Panc1 (cell line): ENCODE measurements at regions of chr6 and their contacts with region 1.

Region 1: GRCh38 chr6:17987576-17988421 is at the start of gene KIF13A:
- DNase-seq: no peak
- ATAC-seq: peak; percentile 91
- H3K4me3 ChIP-seq: peak within 1 kb of the TSS; percentile 72 to 91
- H3K27ac ChIP-seq: peak within 1 kb of the TSS; percentile 85
- H3K4me1 ChIP-seq: peaks cover 30% of the 10 kb centered on the region
- H3K27me3 ChIP-seq: no peaks in the 10 kb centered on the region
- CTCF ChIP-seq: no peak; the same call in 1 of the 2 replicates
- total RNA-seq, gene KIF13A: 49.3 TPM

Region 2: GRCh38 chr6:17865798-17866725 is 121.7 kb before region 1 on chr6:
- CTCF ChIA-PET with region 1: no interaction called
- POLR2A ChIA-PET with region 1: no interaction called
- in situ Hi-C with region 1: no loop called
- intact Hi-C with region 1: loop called (anchors 10 kb)
- DNase-seq: peak; percentile 92
- ATAC-seq: peak; percentile 91
- H3K4me3 ChIP-seq: no peak overlapping the region
- H3K27ac ChIP-seq: peak overlapping the region; percentile 81
- H3K4me1 ChIP-seq: peaks cover 50% of the 10 kb centered on the region
- H3K27me3 ChIP-seq: no peaks in the 10 kb centered on the region
- CTCF ChIP-seq: no peak

Region 3: DNA sequence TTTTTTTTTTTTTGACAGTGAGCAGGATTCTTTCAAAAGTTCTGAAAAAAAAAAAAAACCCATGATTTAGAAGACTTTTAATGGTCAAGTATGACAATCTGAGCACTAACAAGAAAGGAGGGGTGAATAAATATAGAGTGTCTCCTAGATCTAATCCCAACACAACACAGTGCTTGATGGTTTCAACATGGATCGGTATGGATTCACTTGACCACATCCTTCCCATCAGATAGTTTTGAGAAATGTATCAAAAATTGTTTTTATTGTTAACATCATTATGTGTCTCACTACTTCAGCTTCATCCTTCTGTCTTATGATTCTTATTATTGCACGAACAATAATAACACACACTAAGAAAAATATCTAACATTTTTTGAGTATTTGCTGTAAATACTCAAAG is 21.3 kb before region 1 on chr6:
- CTCF ChIA-PET with region 1: interaction called, 3 read pairs
- POLR2A ChIA-PET with region 1: interaction called, 10 read pairs
- in situ Hi-C with region 1: no loop called
- intact Hi-C with region 1: no loop called
- DNase-seq: no peak
- ATAC-seq: no peak
- H3K4me3 ChIP-seq: no peak overlapping the region
- H3K27ac ChIP-seq: no peak overlapping the region
- H3K4me1 ChIP-seq: no peaks in the 10 kb centered on the region; the same call in 1 of the 2 replicates
- H3K27me3 ChIP-seq: no peaks in the 10 kb centered on the region
- CTCF ChIP-seq: no peak

Region 4: DNA sequence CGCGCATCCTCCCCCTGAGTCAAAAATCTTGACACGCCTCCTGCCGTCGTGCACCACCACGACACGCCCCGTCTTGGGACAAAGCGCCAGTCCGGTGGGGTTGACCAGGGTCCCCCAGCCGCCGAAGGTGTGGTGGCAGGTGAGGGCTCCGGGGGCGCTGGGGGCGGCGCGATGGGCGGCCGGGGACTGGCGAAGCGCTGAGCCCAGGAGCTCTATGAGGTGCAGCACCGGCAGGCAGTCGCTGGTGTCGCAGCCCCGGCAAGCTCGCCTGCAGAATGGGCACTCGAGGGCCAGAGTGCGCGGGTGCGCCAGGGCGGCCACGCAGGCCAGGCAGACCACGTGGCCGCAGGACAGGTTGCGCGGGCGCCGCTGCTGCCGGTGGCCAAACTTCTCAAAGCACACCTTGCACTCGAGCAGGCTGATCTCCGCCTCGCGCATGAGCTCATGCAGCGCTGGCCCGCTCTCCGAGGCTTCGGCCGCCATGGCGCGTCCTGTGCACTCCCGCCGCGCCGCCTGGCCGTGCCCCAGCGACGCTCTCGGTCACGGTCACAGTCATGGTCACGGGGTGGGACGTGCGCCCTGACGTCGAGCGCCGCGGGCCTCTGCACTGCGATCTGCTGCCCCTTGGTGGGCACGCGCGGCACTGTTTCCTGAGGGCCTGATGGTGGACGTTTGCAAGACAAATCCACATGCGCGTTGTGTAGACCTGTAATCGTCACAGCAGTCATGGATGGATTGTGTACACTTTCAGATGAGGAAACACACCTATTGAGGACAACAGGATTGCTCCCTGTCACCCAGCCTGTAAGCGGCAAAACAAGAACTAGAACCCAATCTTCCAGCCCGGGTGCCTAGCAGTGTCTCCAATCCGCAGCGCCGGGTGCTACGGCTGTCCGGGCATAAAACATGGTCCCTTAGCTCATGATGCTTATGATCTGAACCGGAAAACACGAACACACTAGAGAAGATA is 134.6 kb after region 1 on chr6 and contains the start of gene NHLRC1:
- CTCF ChIA-PET with region 1: no interaction called
- POLR2A ChIA-PET with region 1: no interaction called
- in situ Hi-C with region 1: no loop called
- intact Hi-C with region 1: loop called (anchors 10 kb)
- DNase-seq: peak; percentile 76
- ATAC-seq: peak; percentile 99
- H3K4me3 ChIP-seq: peak within 1 kb of the TSS; percentile 49 to 69
- H3K27ac ChIP-seq: peak within 1 kb of the TSS; percentile 86
- H3K4me1 ChIP-seq: no peaks in the 10 kb centered on the region
- H3K27me3 ChIP-seq: no peaks in the 10 kb centered on the region
- CTCF ChIP-seq: peak; percentile 93
- total RNA-seq, gene NHLRC1: 2.1 TPM